Naive thymus-derived CD4-positive, alpha-beta T cell (primary cell): ENCODE measurements at regions of chr6 and their contacts with region 1.

Region 1: DNA sequence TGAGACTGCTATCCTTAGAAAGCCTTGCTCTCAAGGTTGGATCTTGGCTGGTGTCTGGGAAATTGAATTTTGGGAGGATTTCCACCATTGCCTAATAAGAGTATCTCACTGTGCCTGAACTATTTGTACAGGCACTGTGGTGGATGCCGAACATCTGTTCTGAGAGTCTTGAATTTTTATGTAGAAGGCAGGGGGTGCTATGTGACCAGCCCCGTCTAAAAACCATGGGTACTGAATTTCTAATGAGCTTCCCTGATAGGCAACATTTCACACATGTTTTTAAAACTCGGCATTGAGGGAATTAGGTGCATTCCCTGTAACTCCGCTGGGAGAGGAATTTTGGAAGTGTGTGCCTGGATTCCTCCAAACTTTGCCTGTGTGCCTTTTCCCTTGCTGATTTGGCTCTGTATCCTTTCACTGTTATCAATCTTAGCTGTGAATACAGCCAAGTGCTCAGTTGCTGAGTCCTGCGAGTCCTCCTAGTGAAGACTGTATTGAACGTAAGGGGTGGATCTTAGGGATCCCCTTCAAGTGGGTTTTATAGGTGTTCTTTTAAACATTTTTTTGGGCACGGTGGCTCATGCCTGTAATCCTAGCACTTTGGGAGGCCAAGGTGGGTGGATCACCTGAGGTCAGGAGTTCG is 27.6 kb upstream of the SCAF8 start:
- DNase-seq: peak in 3 of 9 donors; percentile 5 to 13 (median 7)
- ATAC-seq: no peak
- H3K4me3 ChIP-seq: no peak overlapping the region
- H3K4me3 Mint-ChIP-seq: no peak overlapping the region
- H3K27ac ChIP-seq: no peak overlapping the region
- H3K27ac Mint-ChIP-seq: no peak overlapping the region
- H3K4me1 ChIP-seq: no peaks in the 10 kb centered on the region
- H3K4me1 Mint-ChIP-seq: no peaks in the 10 kb centered on the region
- H3K27me3 ChIP-seq: no peaks in the 10 kb centered on the region
- H3K27me3 Mint-ChIP-seq: peaks cover 4 to 26% (median 13%) of the 10 kb centered on the region in 5 donors

Region 2: GRCh38 chr6:154156135-154156896 is 549.3 kb before region 1 on chr6:
- CTCF ChIA-PET with region 1: no interaction called
- POLR2A ChIA-PET with region 1: no interaction called
- intact Hi-C with region 1: no loop called
- DNase-seq: peak; percentile 29 to 70 (median 58)
- ATAC-seq: peak; percentile 92
- H3K4me3 ChIP-seq: peak overlapping the region; percentile 57
- H3K4me3 Mint-ChIP-seq: peak overlapping the region; percentile 57 to 91 (median 81)
- H3K27ac ChIP-seq: peak overlapping the region; percentile 71
- H3K27ac Mint-ChIP-seq: peak overlapping the region; percentile 81 to 98 (median 92)
- H3K4me1 ChIP-seq: peaks cover 24 to 34% of the 10 kb centered on the region in 2 donors
- H3K4me1 Mint-ChIP-seq: peaks cover 29 to 84% (median 67%) of the 10 kb centered on the region in 7 donors
- H3K27me3 ChIP-seq: no peaks in the 10 kb centered on the region
- H3K27me3 Mint-ChIP-seq: peaks cover 0 to 2% (median 0%) of the 10 kb centered on the region in 5 donors

Region 3: GRCh38 chr6:154805288-154805911 is 99.8 kb after region 1 on chr6:
- CTCF ChIA-PET with region 1: interaction called, 8 read pairs
- POLR2A ChIA-PET with region 1: no interaction called
- intact Hi-C with region 1: loop called in 1 of 2 experiments (anchors 1 kb)
- DNase-seq: peak in 7 of 9 donors; percentile 16 to 59 (median 44)
- ATAC-seq: peak; percentile 80
- H3K4me3 ChIP-seq: no peak overlapping the region
- H3K4me3 Mint-ChIP-seq: no peak overlapping the region
- H3K27ac ChIP-seq: no peak overlapping the region
- H3K27ac Mint-ChIP-seq: peak overlapping the region in 3 of 9 donors; percentile 26 to 66 (median 48)
- H3K4me1 ChIP-seq: no peaks in the 10 kb centered on the region
- H3K4me1 Mint-ChIP-seq: peaks cover 1 to 8% (median 5%) of the 10 kb centered on the region in 7 donors
- H3K27me3 ChIP-seq: no peaks in the 10 kb centered on the region
- H3K27me3 Mint-ChIP-seq: no peaks in the 10 kb centered on the region